ENCODE measurements at regions of chr4 and their contacts with region 1.

Region 1: GRCh38 chr4:17562160-17562559 is 14.8 kb upstream of the LAP3 start:
- ATAC-seq: peak in 1 of 8 experiments; percentile 41
- H3K4me3 ChIP-seq: no peak overlapping the region
- H3K27ac ChIP-seq: no peak overlapping the region
- H3K4me1 ChIP-seq: no peaks in the 10 kb centered on the region

Region 2: GRCh38 chr4:17702641-17703040 is 140.5 kb after region 1 on chr4:
- in situ Hi-C with region 1: no loop called
- ATAC-seq: peak in 3 of 8 experiments; percentile 32 to 65 (median 38)
- H3K4me3 ChIP-seq: no peak overlapping the region
- H3K27ac ChIP-seq: no peak overlapping the region
- H3K4me1 ChIP-seq: peaks cover 3 to 11% of the 10 kb centered on the region in 2 donors

Region 3: GRCh38 chr4:18111081-18111480 is 548.9 kb after region 1 on chr4:
- in situ Hi-C with region 1: no loop called
- ATAC-seq: peak in 1 of 8 experiments; percentile 59
- H3K4me3 ChIP-seq: no peak overlapping the region
- H3K27ac ChIP-seq: no peak overlapping the region
- H3K4me1 ChIP-seq: no peaks in the 10 kb centered on the region

Region 4: GRCh38 chr4:18593445-18594002 is 1031.4 kb after region 1 on chr4:
- in situ Hi-C with region 1: loop called in 4 of 9 experiments (anchors 25 kb)
- ATAC-seq: peak; percentile 72 to 89 (median 84)
- H3K4me3 ChIP-seq: no peak overlapping the region
- H3K27ac ChIP-seq: no peak overlapping the region
- H3K4me1 ChIP-seq: peaks cover 0 to 3% of the 10 kb centered on the region in 2 donors

Measured in motor neuron (in vitro differentiated cells).